PC-9 (cell line): ENCODE measurements at regions of chr1 and their contacts with region 1.

Region 1: DNA sequence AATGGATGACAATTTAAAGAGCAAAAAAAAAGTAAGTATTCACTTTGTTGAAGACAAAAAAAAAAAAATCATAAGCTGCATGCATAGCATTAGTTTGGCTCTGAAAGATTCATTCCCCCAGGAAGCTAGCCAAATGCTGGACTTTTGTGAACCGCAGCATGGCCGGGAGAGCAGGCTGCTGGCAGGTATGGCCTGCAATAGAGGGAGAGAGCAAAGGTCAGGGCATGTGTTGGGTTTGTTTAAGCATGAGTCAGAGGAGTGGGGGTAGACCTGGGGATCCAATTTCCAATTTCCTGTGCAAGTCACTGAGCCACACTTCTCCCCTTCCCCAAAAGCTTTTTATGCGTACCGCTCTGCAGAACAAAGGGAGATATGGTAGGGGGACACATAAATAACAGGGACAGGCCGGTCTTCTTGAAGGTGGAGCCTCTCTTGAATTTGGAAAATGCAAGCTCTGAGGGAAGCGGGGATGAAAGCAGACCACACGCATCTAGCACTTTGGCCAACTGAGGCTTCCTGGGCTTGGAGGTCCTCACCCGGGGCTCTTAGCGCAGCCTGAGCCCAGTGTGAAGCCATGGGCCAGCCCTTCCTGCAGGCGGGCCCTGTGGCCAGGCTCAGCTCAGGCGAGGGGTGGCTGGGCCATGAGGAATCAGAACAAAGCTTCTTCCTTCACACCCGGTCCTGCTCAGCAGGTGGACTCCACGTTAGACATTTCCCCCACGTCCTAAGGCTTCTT is 171.1 kb downstream of the TOMM20 start:
- DNase-seq: peak; percentile 91 to 96
- H3K4me3 ChIP-seq: peak overlapping the region; percentile 37; the same call in 1 of the 2 replicates
- H3K27ac ChIP-seq: peak overlapping the region; percentile 99
- H3K4me1 ChIP-seq: peaks cover 82% of the 10 kb centered on the region
- H3K27me3 ChIP-seq: no peaks in the 10 kb centered on the region
- CTCF ChIP-seq: no peak

Region 2: DNA sequence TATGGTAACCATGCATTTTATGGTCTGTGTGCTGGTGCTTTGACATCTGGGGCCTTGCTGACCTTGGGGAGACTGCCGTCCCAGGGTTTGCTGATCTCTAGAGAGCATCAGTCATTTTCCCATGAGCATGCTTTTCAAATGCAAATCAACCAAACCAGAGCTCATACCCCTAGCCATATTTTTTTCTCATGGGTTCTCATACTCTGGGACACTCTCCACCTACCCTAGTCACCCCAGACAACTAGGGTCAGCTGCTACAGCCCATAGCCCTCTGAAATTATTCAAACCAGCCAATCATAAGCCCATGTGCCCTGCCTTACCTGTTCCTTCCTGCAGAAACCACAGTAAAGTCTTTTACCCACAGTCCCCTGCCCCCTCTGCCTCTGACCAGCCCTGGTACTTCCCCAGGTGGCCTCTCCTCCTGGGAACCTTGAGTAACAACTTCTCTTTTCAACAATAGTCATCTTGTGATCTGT is 1498.0 kb before region 1 on chr1:
- CTCF ChIA-PET with region 1: no interaction called
- POLR2A ChIA-PET with region 1: interaction called, 12 read pairs
- intact Hi-C with region 1: no loop called
- DNase-seq: no peak
- H3K4me3 ChIP-seq: no peak overlapping the region
- H3K27ac ChIP-seq: no peak overlapping the region
- H3K4me1 ChIP-seq: no peaks in the 10 kb centered on the region
- H3K27me3 ChIP-seq: no peaks in the 10 kb centered on the region
- CTCF ChIP-seq: no peak

Region 3: GRCh38 chr1:234933475-234933874 is 24.0 kb before region 1 on chr1:
- CTCF ChIA-PET with region 1: no interaction called
- POLR2A ChIA-PET with region 1: interaction called, 10 read pairs
- intact Hi-C with region 1: no loop called
- DNase-seq: peak; percentile 43 to 69
- H3K4me3 ChIP-seq: no peak overlapping the region
- H3K27ac ChIP-seq: peak overlapping the region; percentile 44; the same call in 1 of the 2 replicates
- H3K4me1 ChIP-seq: peaks cover 18% of the 10 kb centered on the region
- H3K27me3 ChIP-seq: no peaks in the 10 kb centered on the region
- CTCF ChIP-seq: no peak

Region 4: GRCh38 chr1:234978397-234979295 is 21.1 kb after region 1 on chr1:
- CTCF ChIA-PET with region 1: interaction called, 3 read pairs
- POLR2A ChIA-PET with region 1: interaction called, 21 read pairs
- intact Hi-C with region 1: loop called (anchors 2 kb)
- DNase-seq: peak; percentile 45 to 93
- H3K4me3 ChIP-seq: peak overlapping the region; percentile 30; the same call in 1 of the 2 replicates
- H3K27ac ChIP-seq: peak overlapping the region; percentile 99
- H3K4me1 ChIP-seq: peaks cover 99% of the 10 kb centered on the region
- H3K27me3 ChIP-seq: no peaks in the 10 kb centered on the region
- CTCF ChIP-seq: no peak

Region 5: DNA sequence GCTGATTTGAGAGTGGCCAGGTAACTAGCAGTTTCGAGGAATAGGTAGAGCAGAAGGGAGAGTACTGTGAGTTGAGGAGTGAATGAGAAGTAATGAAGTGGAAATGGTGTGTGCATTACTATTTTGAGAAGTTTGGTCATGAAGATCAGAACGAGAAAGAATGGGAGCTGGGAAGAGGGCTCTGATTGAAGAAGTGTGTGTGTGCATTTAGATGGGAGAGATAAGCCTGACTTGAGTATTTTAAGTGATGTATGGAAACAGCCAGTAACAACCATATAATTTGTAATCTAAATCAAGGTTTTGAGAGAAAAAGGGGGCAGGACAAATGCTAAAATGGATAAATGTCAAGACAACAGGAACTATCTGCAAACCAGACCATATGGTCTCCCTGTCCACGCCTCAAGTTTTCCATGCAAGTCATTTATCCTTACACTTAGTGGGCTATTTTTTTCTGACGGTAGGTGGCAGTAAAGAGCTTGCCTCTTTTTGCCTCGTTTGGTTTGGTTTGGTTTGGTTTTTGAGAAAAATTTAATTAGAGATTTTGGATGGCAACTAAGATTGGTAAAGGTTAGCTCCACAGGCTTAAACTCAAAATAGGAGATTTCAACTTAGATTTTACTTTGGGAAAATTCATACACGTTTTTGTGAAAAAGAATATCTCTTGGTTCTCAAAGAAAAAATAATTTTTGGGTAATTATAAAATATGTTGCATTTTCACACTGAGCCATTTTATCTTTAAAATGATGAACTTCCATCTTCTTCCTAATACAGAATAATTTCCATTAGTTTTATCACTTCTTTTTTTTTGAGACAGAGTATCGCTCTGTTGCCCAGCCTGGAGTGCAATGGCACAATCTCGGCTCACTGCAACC is 556.2 kb after region 1 on chr1:
- CTCF ChIA-PET with region 1: no interaction called
- POLR2A ChIA-PET with region 1: no interaction called
- intact Hi-C with region 1: no loop called
- DNase-seq: peak; percentile 34 to 57
- H3K4me3 ChIP-seq: no peak overlapping the region
- H3K27ac ChIP-seq: no peak overlapping the region
- H3K4me1 ChIP-seq: no peaks in the 10 kb centered on the region
- H3K27me3 ChIP-seq: no peaks in the 10 kb centered on the region
- CTCF ChIP-seq: peak; percentile 93